ENCODE measurements at regions of chr7 and their contacts with region 1.

Region 1: DNA sequence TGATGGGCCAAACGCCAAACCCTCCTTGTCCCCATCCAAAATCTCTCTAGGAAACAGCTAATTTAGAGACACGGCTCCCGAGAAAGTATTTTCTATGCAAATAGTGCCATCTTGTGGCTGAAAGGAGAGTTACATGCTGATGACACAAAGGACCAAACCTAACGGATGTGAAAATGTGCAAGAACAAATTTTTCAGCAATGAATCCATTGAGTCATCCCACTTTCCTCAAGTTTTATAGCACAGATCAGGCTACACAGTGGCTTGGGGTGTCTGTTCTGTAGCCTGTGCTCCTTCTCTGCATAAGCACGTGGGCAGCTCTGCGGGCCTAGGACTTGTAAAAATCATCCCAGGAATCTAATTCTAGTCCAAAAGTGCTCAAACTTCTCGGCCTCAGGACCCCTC is 154.8 kb upstream of the PRR15 start:
- DNase-seq: peak; percentile 51 to 89
- H3K4me3 ChIP-seq: no peak overlapping the region
- H3K27ac ChIP-seq: no peak overlapping the region
- H3K4me1 ChIP-seq: no peaks in the 10 kb centered on the region
- H3K27me3 ChIP-seq: no peaks in the 10 kb centered on the region
- CTCF ChIP-seq: peak in 6 of 7 experiments; percentile 51 to 93 (median 82)
- EP300 ChIP-seq: no peak
- POLR2A ChIP-seq: no peak

Region 2: GRCh38 chr7:28926871-28927597 is 481.8 kb before region 1 on chr7:
- intact Hi-C with region 1: loop called (anchors 10 kb)
- DNase-seq: peak; percentile 68 to 95
- H3K4me3 ChIP-seq: peak overlapping the region; percentile 42 to 57 (median 50)
- H3K27ac ChIP-seq: peak overlapping the region; percentile 28 to 67 (median 52)
- H3K4me1 ChIP-seq: peaks cover 0 to 20% (median 18%) of the 10 kb centered on the region in 4 donors
- H3K27me3 ChIP-seq: peaks cover 0 to 12% (median 0%) of the 10 kb centered on the region in 3 donors
- CTCF ChIP-seq: peak in 5 of 7 experiments; percentile 70 to 80 (median 77)
- EP300 ChIP-seq: no peak
- POLR2A ChIP-seq: no peak

Region 3: DNA sequence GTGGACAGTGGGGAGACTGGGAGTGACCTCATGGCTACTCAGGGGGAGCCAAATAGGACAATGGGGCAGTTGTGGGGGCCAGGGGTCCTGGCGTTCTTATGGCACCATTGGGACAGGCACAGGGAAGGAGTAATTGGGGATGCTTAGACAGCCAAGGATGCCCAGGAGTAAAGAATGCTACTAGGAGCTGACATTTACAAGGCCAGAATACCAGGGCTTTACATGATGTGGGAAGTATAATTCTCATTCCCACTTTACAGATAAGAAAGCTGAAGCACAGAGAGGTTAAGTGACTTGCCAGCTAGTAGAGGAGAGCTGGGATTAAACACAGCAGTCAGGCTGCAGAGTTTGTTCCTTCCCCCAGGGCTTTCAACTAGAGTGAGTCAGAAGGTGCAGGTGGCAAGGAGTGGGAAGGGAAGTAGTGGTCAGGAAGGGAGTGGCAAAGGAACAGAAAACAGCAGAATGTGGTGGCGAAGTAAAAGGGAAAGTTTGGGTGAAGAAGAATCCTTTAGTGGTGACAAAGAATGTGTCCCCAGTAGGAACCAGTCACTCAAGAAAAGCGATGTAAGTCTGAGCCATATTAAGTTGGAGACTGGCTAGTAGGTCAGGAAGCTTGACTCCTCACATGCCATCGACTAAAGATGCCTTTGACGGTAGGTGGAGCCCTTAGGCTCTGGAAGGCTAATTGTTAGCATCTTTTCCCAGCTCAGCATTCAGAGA is 295.3 kb before region 1 on chr7:
- intact Hi-C with region 1: loop called (anchors 5 kb)
- DNase-seq: peak in 1 of 2 donors; percentile 60
- H3K4me3 ChIP-seq: no peak overlapping the region
- H3K27ac ChIP-seq: no peak overlapping the region
- H3K4me1 ChIP-seq: peaks cover 3 to 30% (median 13%) of the 10 kb centered on the region in 4 donors
- H3K27me3 ChIP-seq: peaks cover 0 to 11% (median 0%) of the 10 kb centered on the region in 3 donors
- CTCF ChIP-seq: peak in 1 of 7 experiments; percentile 7
- EP300 ChIP-seq: no peak
- POLR2A ChIP-seq: no peak

Region 4: GRCh38 chr7:29189743-29190201 is 219.1 kb before region 1 on chr7:
- intact Hi-C with region 1: loop called (anchors 5 kb)
- DNase-seq: peak; percentile 76 to 90
- H3K4me3 ChIP-seq: peak overlapping the region in 1 of 4 donors; percentile 15
- H3K27ac ChIP-seq: no peak overlapping the region
- H3K4me1 ChIP-seq: peaks cover 12 to 30% (median 26%) of the 10 kb centered on the region in 4 donors
- H3K27me3 ChIP-seq: peaks cover 0 to 31% (median 12%) of the 10 kb centered on the region in 3 donors
- CTCF ChIP-seq: peak in 5 of 7 experiments; percentile 61 to 87 (median 81)
- EP300 ChIP-seq: no peak
- POLR2A ChIP-seq: no peak